Caco-2 (cell line): ENCODE measurements at regions of chr9 and their contacts with region 1.

Region 1: DNA sequence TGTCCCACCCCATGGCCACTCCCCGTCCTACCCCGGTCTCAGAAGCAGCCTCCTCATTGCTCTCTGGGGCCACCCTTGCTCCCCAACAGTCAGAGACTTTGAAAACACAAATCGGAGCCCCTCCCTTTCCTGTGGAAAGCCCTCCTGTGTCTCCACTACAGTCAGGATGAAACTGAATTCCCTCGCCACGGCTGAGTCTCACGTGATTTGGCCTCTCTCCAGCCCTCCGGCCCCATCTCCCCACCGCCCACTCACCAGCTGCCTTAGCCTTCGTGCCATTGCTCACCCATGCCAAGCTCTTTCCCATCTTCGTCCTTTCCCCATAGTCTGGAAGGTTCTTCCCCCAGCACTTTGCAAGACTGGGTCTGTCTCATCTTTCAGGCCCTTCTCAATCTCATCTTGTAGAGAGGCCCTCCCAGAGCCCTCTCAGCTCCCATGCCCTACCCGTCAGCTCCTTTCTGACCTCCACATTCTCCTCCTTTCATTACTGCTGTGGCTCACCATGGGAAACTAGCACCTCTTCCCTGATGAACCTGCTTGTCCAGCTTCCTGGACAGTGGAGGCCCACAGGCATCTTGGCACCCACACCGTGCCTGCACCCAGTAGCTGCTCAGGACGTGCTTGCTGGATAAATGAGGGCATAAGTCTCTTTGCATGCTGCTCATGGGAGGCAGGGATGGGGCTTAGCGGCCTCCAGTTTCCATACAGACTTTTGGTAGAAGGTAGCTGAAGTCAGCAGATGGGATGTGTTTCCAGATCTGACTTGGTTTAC is 126.4 kb upstream of the COL5A1 start:
- DNase-seq: no peak
- H3K4me3 ChIP-seq: no peak overlapping the region
- H3K4me3 Mint-ChIP-seq: no peak overlapping the region
- H3K27ac Mint-ChIP-seq: no peak overlapping the region
- H3K4me1 ChIP-seq: no peaks in the 10 kb centered on the region
- H3K4me1 Mint-ChIP-seq: no peaks in the 10 kb centered on the region
- H3K27me3 ChIP-seq: no peaks in the 10 kb centered on the region
- H3K27me3 Mint-ChIP-seq: no peaks in the 10 kb centered on the region
- CTCF ChIP-seq: no peak

Region 2: GRCh38 chr9:134443168-134444037 is 71.8 kb before region 1 on chr9:
- CTCF ChIA-PET with region 1: no interaction called
- POLR2A ChIA-PET with region 1: no interaction called
- intact Hi-C with region 1: no loop called
- DNase-seq: peak; percentile 84 to 85
- H3K4me3 ChIP-seq: no peak overlapping the region
- H3K4me3 Mint-ChIP-seq: no peak overlapping the region
- H3K27ac Mint-ChIP-seq: no peak overlapping the region
- H3K4me1 ChIP-seq: 0 out of 2 replicates have a peak, but pooled peaks cover 2% of the 10 kb centered on the region
- H3K4me1 Mint-ChIP-seq: no peaks in the 10 kb centered on the region
- H3K27me3 ChIP-seq: no peaks in the 10 kb centered on the region
- H3K27me3 Mint-ChIP-seq: no peaks in the 10 kb centered on the region
- CTCF ChIP-seq: peak; percentile 93 to 97

Region 3: GRCh38 chr9:134454476-134454857 is 60.7 kb before region 1 on chr9:
- CTCF ChIA-PET with region 1: no interaction called
- POLR2A ChIA-PET with region 1: interaction called, 15 read pairs
- intact Hi-C with region 1: no loop called
- DNase-seq: no peak
- H3K4me3 ChIP-seq: no peak overlapping the region
- H3K4me3 Mint-ChIP-seq: no peak overlapping the region
- H3K27ac Mint-ChIP-seq: peak overlapping the region; percentile 86
- H3K4me1 ChIP-seq: peaks cover 24% of the 10 kb centered on the region
- H3K4me1 Mint-ChIP-seq: peaks cover 10% of the 10 kb centered on the region
- H3K27me3 ChIP-seq: no peaks in the 10 kb centered on the region
- H3K27me3 Mint-ChIP-seq: peaks cover 6% of the 10 kb centered on the region
- CTCF ChIP-seq: no peak